HepG2 (cell line): ENCODE measurements at regions of chr2 and their contacts with region 1.

Region 1: DNA sequence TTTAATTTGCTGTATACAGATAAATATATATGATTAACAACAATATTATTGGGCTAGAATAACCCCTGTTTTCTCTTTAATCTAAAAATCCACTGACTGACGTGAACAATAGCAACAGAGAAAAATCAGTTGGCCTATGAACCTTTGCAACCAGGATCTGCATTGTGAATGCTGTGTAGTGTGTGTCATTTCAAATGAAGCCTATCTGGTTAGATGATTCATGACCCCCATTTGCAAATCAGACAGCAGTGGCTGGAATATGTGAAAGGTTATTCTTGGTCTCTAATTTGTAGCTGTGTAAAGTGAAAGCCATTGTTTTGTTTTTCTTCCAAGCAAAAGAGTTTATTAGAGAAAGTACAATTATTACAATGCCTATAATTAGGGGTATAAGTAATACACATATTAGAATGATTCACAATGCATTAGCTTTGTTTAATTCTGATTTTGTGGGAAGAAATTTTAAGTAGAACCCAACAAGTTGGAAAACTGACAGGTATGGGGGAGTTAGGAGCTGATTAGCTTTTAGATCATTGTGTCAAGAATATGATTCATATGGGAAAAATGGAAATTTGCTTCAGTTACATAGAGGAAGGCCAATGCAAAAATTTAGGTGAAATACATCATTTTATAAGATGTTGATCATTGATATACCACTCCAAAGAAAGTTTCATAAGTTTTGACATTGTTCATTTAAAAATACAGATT is 1362.2 kb upstream of the TMEFF2 start:
- DNase-seq: no peak
- ATAC-seq: no peak
- H3K4me3 ChIP-seq: no peak overlapping the region
- H3K27ac ChIP-seq: no peak overlapping the region
- H3K4me1 ChIP-seq: no peaks in the 10 kb centered on the region
- H3K27me3 ChIP-seq: no peaks in the 10 kb centered on the region
- CTCF ChIP-seq: no peak
- EP300 ChIP-seq: no peak
- POLR2A ChIP-seq: no peak
- RAD21 ChIP-seq: no peak

Region 2: DNA sequence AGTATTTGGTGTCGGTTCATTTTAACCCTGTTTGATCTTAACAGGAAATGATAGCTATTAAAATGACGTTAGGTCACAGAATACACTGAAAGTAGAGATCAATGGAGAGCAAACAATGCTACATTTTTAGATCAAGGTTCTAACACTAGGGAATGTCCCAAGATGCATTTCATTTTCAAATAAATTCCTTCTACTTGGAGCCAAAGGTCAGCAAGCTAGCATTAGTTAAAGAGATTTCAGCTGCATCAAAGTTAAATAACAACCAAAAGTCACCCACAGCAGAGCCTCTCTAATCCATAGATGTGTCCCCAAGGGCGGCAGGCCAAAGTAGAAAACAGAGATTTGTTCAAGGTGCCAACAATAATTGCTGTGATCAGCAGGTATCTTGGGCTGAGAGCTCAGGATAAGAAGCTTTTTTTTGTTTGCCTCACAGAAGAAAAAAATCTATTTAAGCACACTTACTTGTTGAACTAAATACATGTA is 128.5 kb before region 1 on chr2:
- CTCF ChIA-PET with region 1: no interaction called
- POLR2A ChIA-PET with region 1: no interaction called
- in situ Hi-C with region 1: no loop called
- intact Hi-C with region 1: no loop called
- DNase-seq: peak; percentile 100
- ATAC-seq: peak; percentile 100
- H3K4me3 ChIP-seq: peak overlapping the region in 2 of 3 experiments; percentile 13 to 24; a peak in 2 of 6 replicates
- H3K27ac ChIP-seq: peak overlapping the region; percentile 82
- H3K4me1 ChIP-seq: peaks cover 33% of the 10 kb centered on the region
- H3K27me3 ChIP-seq: no peaks in the 10 kb centered on the region
- CTCF ChIP-seq: no peak
- EP300 ChIP-seq: peak; percentile 86 to 99; a peak in 3 of 4 replicates
- POLR2A ChIP-seq: no peak
- RAD21 ChIP-seq: no peak

Region 3: DNA sequence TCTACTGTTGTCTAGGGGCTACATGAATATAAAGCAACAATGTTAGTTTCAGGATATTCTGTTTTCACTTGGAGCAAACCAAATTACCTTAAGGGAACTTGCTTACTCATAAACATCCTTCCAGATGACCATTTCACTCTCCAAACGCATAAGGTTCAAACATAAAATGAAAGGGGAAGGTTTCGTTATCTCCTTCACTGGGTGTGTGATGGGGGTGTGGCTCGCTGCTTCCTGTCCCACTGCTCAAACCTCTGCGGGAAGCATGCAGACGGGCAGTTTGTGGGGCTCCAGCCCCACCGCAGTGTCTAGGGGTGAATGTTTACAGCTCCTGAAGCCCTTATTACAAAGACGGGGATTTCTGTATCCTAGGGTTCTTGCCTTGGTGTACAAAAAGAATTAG is 51.3 kb before region 1 on chr2:
- CTCF ChIA-PET with region 1: no interaction called
- POLR2A ChIA-PET with region 1: no interaction called
- in situ Hi-C with region 1: no loop called
- intact Hi-C with region 1: no loop called
- DNase-seq: no peak
- ATAC-seq: no peak
- H3K4me3 ChIP-seq: no peak overlapping the region
- H3K27ac ChIP-seq: no peak overlapping the region
- H3K4me1 ChIP-seq: no peaks in the 10 kb centered on the region
- H3K27me3 ChIP-seq: no peaks in the 10 kb centered on the region
- CTCF ChIP-seq: no peak
- EP300 ChIP-seq: no peak
- POLR2A ChIP-seq: no peak
- RAD21 ChIP-seq: no peak

Region 4: GRCh38 chr2:193520709-193521458 is 36.0 kb before region 1 on chr2:
- CTCF ChIA-PET with region 1: no interaction called
- POLR2A ChIA-PET with region 1: no interaction called
- in situ Hi-C with region 1: no loop called
- intact Hi-C with region 1: loop called (anchors 1 kb)
- DNase-seq: no peak
- ATAC-seq: no peak
- H3K4me3 ChIP-seq: no peak overlapping the region
- H3K27ac ChIP-seq: no peak overlapping the region
- H3K4me1 ChIP-seq: peaks cover 7% of the 10 kb centered on the region
- H3K27me3 ChIP-seq: no peaks in the 10 kb centered on the region
- CTCF ChIP-seq: no peak
- EP300 ChIP-seq: no peak
- POLR2A ChIP-seq: no peak
- RAD21 ChIP-seq: no peak

Region 5: GRCh38 chr2:193824474-193824873 is 267.6 kb after region 1 on chr2:
- CTCF ChIA-PET with region 1: no interaction called
- POLR2A ChIA-PET with region 1: no interaction called
- in situ Hi-C with region 1: no loop called
- intact Hi-C with region 1: no loop called
- DNase-seq: no peak
- ATAC-seq: no peak
- H3K4me3 ChIP-seq: no peak overlapping the region
- H3K27ac ChIP-seq: no peak overlapping the region
- H3K4me1 ChIP-seq: no peaks in the 10 kb centered on the region
- H3K27me3 ChIP-seq: no peaks in the 10 kb centered on the region
- CTCF ChIP-seq: no peak
- EP300 ChIP-seq: no peak
- POLR2A ChIP-seq: no peak
- RAD21 ChIP-seq: no peak